CD8-positive, alpha-beta T cell (primary cell): ENCODE measurements at regions of chr4 and their contacts with region 1.

Region 1: DNA sequence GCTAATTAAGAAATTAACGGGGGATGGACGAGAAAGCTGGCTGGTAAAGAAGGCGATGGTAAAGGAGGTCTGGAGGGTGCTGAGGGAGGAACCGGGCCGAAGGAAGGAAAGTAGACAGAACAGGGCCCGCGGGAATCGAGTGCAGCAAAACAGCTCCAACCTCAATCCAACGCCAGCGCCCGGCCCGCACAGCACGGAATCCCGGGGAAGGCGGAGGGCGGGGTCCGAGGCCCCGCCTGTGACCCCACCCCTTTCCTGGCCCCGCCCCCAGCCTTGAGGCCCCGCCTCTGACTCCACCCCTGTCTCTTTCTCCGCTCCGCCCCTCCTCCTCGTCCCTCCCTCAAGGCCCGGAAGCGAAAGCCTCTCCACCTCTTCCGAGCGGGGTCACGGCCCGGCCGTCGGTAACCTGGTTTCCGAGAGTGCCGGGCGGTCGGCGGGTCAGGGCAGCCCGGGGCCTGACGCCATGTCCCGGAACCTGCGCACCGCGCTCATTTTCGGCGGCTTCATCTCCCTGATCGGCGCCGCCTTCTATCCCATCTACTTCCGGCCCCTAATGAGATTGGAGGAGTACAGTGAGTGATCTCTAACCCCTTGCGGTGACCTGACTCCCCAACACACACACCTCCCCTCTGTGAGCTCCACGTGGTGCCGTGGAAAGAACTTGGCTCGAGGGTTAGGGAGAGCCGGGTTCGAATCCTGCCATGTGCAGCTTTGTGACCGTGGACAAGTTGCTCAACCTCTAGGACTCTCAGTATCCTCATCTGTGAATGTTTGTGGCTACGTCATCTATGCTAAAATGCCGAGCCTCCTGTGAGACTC is at the start of gene SMIM20:
- DNase-seq: peak; percentile 81 to 95 (median 87)
- ATAC-seq: peak; percentile 94
- H3K4me3 ChIP-seq: peak within 1 kb of the TSS; percentile 72 to 78
- H3K4me3 Mint-ChIP-seq: peak within 1 kb of the TSS; percentile 97
- H3K27ac ChIP-seq: peak within 1 kb of the TSS; percentile 81 to 95
- H3K27ac Mint-ChIP-seq: peak within 1 kb of the TSS; percentile 98
- H3K4me1 ChIP-seq: peaks cover 18% of the 10 kb centered on the region
- H3K4me1 Mint-ChIP-seq: peaks cover 24% of the 10 kb centered on the region
- H3K27me3 ChIP-seq: no peaks in the 10 kb centered on the region
- H3K27me3 Mint-ChIP-seq: no peaks in the 10 kb centered on the region
- CTCF ChIP-seq: no peak
- total RNA-seq, gene SMIM20: 7.5 to 9.8 TPM

Region 2: DNA sequence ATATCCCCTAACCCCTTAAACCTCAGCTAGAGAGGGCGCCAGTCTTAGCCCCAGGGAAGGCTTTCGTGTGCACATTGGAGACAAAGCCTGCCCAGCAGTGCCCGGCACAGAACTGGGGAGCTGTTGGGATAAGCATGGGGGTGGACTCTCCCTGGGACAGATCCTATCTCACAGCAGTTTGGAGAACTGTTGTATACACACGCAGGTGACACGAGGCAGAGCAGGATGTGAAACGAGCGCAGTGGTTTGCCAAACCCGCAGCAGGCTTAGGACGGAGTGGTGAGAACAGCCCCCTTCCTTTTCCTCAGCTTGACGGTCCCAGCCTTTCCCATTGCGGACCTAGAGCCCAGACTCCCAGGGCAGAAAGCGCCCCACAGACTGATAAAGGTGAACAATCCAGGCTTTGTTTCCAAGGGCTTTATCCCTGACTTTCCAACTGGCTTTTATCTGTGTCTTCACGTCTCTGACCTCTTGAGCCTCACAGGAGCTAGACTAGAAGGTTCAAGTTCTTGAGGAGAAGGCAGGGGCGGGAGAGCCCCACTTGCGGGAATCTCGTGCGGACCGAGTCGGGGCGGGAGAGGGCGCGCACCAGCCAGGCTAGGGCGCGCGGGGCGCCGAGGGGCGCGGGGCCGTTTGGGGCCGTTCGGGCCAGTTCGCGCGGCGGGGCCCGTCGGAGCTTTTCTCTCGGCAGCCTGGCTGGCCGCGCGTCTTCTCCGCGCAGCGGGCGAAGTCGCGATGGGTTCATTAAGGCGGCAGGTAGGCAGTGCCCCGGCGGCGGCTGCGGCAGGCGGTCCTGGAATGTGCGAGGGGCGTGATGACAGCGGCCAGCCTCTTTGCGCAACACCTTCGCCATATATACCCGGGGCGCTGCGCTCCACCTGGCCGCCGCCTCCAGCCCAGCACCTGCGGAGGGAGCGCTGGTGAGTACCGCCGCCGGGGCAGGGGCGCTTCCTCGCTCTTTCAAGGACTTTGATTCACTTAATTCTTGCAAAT is 258.8 kb before region 1 on chr4 and contains the start of gene SLC34A2:
- CTCF ChIA-PET with region 1: no interaction called
- POLR2A ChIA-PET with region 1: no interaction called
- intact Hi-C with region 1: no loop called
- DNase-seq: peak in 1 of 9 experiments; percentile 9
- ATAC-seq: no peak
- H3K4me3 ChIP-seq: no peak within 1 kb of the TSS
- H3K4me3 Mint-ChIP-seq: no peak within 1 kb of the TSS
- H3K27ac ChIP-seq: no peak within 1 kb of the TSS
- H3K27ac Mint-ChIP-seq: no peak within 1 kb of the TSS
- H3K4me1 ChIP-seq: no peaks in the 10 kb centered on the region
- H3K4me1 Mint-ChIP-seq: peaks cover 6% of the 10 kb centered on the region
- H3K27me3 ChIP-seq: no peaks in the 10 kb centered on the region
- H3K27me3 Mint-ChIP-seq: peaks cover 35% of the 10 kb centered on the region
- CTCF ChIP-seq: no peak
- total RNA-seq, gene SLC34A2: not detected

Region 3: GRCh38 chr4:25862411-25863346 is 51.4 kb before region 1 on chr4 and contains the start of gene SEL1L3:
- CTCF ChIA-PET with region 1: interaction called, 19 read pairs
- POLR2A ChIA-PET with region 1: interaction called, 13 read pairs
- intact Hi-C with region 1: loop called (anchors 1 kb)
- DNase-seq: peak in 8 of 9 experiments; percentile 34 to 71 (median 51)
- ATAC-seq: peak; percentile 37
- H3K4me3 ChIP-seq: peak within 1 kb of the TSS; percentile 71 to 72
- H3K4me3 Mint-ChIP-seq: peak within 1 kb of the TSS; percentile 100
- H3K27ac ChIP-seq: peak within 1 kb of the TSS; percentile 54 to 80
- H3K27ac Mint-ChIP-seq: peak within 1 kb of the TSS; percentile 91
- H3K4me1 ChIP-seq: peaks cover 40% of the 10 kb centered on the region
- H3K4me1 Mint-ChIP-seq: peaks cover 41% of the 10 kb centered on the region
- H3K27me3 ChIP-seq: no peaks in the 10 kb centered on the region
- H3K27me3 Mint-ChIP-seq: no peaks in the 10 kb centered on the region
- CTCF ChIP-seq: no peak
- total RNA-seq, gene SEL1L3: 31.2 to 33.7 TPM